Activated CD4-positive, alpha-beta memory T cell treated with anti-CD3 and anti-CD28 coated beads for 36 hours (primary cell): ENCODE measurements at regions of chr5 and their contacts with region 1.

Region 1: DNA sequence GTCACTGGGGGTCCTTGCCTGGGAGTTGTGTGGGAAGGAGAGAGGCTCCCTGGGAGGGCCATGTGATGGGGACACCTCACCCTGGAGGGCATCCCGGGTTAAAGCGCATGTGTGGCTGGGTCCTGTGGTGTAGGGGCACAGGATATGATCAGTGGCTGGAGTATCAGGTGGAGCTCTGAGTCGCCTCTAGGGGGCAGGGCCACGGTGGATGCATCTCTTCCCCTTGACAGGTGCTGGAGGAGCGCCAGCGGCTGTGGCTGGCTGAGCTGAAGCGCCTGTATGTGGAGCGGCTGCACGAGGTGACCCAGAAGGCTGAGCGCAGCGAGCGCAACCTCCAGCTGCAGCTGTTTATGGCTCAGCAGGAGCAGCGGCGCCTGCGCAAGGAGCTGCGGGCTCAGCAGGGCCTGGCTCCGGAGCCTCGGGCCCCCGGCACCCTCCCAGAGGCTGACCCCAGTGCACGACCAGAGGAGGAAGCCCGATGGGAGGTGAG is 7.6 kb downstream of the N4BP3 start:
- DNase-seq: peak; percentile 90
- H3K4me3 Mint-ChIP-seq: no peak overlapping the region
- H3K27ac Mint-ChIP-seq: no peak overlapping the region
- H3K4me1 Mint-ChIP-seq: peaks cover 18% of the 10 kb centered on the region
- H3K27me3 Mint-ChIP-seq: no peaks in the 10 kb centered on the region

Region 2: DNA sequence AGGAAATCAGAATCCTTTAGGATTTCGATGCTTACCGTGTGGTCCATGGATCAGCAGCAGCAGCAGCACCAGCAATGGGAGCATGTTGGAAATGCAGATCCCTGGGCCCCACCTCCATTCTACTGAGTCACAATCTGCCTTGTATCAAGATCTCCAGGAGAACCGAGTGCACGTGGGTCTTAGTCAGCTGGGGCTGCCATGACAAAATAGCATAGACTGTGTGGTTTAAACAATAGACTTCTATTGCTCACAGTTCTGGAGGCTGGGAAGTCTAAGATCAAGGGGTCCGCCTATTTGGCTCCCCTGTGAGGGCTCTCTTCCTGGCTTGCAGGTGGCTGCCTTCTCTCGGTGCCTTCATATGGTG is 123.6 kb before region 1 on chr5:
- CTCF ChIA-PET with region 1: no interaction called
- POLR2A ChIA-PET with region 1: no interaction called
- intact Hi-C with region 1: no loop called
- DNase-seq: no peak
- H3K4me3 Mint-ChIP-seq: no peak overlapping the region
- H3K27ac Mint-ChIP-seq: no peak overlapping the region
- H3K4me1 Mint-ChIP-seq: no peaks in the 10 kb centered on the region
- H3K27me3 Mint-ChIP-seq: peaks cover 21% of the 10 kb centered on the region

Region 3: DNA sequence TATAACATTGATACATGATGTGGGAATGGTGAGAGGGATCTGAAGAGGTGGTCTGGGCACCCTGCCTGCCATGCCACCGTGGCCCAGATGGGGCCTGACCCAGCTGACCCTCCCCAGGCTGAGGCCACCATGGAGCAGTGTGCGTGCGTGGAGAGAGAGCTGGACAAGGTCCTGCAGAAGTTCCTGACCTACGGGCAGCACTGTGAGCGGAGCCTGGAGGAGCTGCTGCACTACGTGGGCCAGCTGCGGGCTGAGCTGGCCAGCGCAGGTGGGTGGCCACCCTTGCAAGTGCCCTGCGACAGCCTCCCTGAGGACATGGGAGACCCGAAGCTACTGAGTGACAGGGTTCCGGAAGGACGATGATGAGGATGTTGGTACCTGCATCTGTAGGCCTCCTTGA is 17.1 kb after region 1 on chr5:
- CTCF ChIA-PET with region 1: interaction called, 26 read pairs
- POLR2A ChIA-PET with region 1: no interaction called
- intact Hi-C with region 1: no loop called
- DNase-seq: no peak
- H3K4me3 Mint-ChIP-seq: no peak overlapping the region
- H3K27ac Mint-ChIP-seq: no peak overlapping the region
- H3K4me1 Mint-ChIP-seq: peaks cover 12% of the 10 kb centered on the region
- H3K27me3 Mint-ChIP-seq: no peaks in the 10 kb centered on the region

Region 4: DNA sequence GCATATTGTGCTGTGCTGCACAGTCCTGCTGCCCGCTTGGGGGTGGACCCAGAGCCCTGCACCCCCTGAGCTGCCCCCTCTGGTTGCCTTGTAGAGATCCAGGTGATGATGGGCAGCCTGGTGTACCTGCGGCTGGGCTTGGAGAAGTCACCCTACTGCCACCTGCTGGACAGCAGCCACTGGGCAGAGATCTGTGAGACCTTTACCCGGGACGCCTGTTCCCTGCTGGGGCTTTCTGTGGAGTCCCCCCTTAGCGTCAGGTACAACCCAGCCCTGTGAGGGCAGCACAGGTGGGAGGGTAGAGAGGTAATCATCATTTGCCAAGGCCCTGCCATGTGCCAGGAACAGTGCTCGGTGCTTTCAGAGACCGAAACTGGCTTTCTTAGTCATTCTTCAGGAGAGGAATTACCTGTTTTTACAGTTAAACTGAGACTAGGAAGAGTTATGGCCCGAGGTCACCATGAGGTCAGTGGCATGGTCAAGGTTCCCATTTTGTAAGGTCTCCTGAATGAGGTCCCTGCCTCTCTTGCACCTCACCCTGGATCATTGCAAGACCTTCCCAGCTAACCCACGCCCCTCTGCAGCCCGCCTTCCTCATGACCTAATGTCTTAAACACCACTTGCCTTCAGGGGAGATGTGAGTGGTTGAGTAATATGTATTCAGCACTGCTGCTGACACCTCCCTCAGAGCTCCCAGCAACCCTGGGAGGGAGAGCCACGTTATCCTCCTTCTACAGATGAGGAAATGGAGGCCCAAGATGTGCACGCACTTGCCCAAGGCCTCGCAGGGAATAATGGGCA is 25.3 kb after region 1 on chr5:
- CTCF ChIA-PET with region 1: interaction called, 15 read pairs
- POLR2A ChIA-PET with region 1: interaction called, 4 read pairs
- intact Hi-C with region 1: loop called (anchors 1 kb)
- DNase-seq: peak; percentile 80
- H3K4me3 Mint-ChIP-seq: no peak overlapping the region
- H3K27ac Mint-ChIP-seq: peak overlapping the region; percentile 56
- H3K4me1 Mint-ChIP-seq: peaks cover 42% of the 10 kb centered on the region
- H3K27me3 Mint-ChIP-seq: no peaks in the 10 kb centered on the region

Region 5: DNA sequence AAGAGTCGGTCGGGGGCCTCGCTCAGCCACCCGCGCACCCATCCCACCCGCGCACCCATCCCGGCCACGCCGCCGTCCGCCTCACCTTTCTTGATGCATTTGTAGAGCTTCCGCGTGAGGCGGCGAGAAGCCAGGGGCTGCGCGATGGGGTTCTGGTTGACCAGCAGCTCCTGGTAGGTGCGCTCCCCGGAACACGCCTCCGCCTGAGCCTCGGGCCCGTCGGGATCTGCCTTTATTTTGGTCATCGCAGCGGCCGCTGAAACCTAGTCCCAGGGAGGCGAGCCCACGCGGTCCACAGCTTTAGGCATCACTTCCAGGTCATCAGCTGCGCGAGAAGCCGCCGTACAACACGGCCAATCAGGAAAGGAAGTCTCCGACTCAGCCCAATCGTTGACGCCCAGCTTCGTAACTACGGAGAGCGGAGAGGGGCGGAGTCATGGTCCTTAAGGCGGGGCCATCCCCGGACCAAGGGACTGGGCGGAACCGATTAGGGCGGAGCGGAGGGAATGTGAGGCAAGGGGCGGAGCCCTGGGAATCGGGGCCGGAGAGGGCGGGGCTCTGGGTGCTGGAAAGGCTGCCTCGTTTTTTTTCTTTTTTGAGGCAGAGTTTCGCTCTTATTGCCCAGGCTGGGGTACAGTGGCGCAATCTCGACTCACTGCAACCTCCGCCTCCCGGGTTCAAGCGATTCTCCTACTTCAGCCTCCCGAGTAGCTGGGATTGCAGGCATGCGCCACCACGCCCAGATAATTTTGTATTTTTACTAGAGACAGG is 32.8 kb after region 1 on chr5 and contains the start of gene NHP2:
- CTCF ChIA-PET with region 1: interaction called, 20 read pairs
- POLR2A ChIA-PET with region 1: interaction called, 9 read pairs
- intact Hi-C with region 1: no loop called
- DNase-seq: peak; percentile 99
- H3K4me3 Mint-ChIP-seq: peak within 1 kb of the TSS; percentile 93
- H3K27ac Mint-ChIP-seq: peak within 1 kb of the TSS; percentile 88
- H3K4me1 Mint-ChIP-seq: peaks cover 48% of the 10 kb centered on the region
- H3K27me3 Mint-ChIP-seq: no peaks in the 10 kb centered on the region
- total RNA-seq, gene NHP2: 231 to 246 TPM

Region 6: GRCh38 chr5:178163772-178164735 is 43.1 kb after region 1 on chr5:
- CTCF ChIA-PET with region 1: interaction called, 5 read pairs
- POLR2A ChIA-PET with region 1: no interaction called
- intact Hi-C with region 1: loop called (anchors 5 kb)
- DNase-seq: peak; percentile 94
- H3K4me3 Mint-ChIP-seq: peak overlapping the region; percentile 23
- H3K27ac Mint-ChIP-seq: no peak overlapping the region
- H3K4me1 Mint-ChIP-seq: peaks cover 5% of the 10 kb centered on the region
- H3K27me3 Mint-ChIP-seq: peaks cover 11% of the 10 kb centered on the region

Region 7: GRCh38 chr5:178261666-178262606 is 141.0 kb after region 1 on chr5:
- CTCF ChIA-PET with region 1: no interaction called
- POLR2A ChIA-PET with region 1: no interaction called
- intact Hi-C with region 1: no loop called
- DNase-seq: no peak
- H3K4me3 Mint-ChIP-seq: no peak overlapping the region
- H3K27ac Mint-ChIP-seq: no peak overlapping the region
- H3K4me1 Mint-ChIP-seq: no peaks in the 10 kb centered on the region
- H3K27me3 Mint-ChIP-seq: no peaks in the 10 kb centered on the region